ENCODE measurements at regions of chr14 and their contacts with region 1.

Region 1: GRCh38 chr14:20682435-20683124 is 1.8 kb upstream of the RNASE4 start:
- DNase-seq: peak; percentile 80 to 85 (median 82)
- H3K4me3 ChIP-seq: peak overlapping the region; percentile 75 to 88
- H3K4me3 Mint-ChIP-seq: no peak overlapping the region
- H3K27ac ChIP-seq: peak overlapping the region; percentile 91
- H3K27ac Mint-ChIP-seq: no peak overlapping the region
- H3K4me1 ChIP-seq: peaks cover 35% of the 10 kb centered on the region
- H3K4me1 Mint-ChIP-seq: peaks cover 9 to 23% (median 16%) of the 10 kb centered on the region in 4 donors
- H3K27me3 ChIP-seq: no peaks in the 10 kb centered on the region
- H3K27me3 Mint-ChIP-seq: peaks cover 0 to 8% of the 10 kb centered on the region in 2 donors

Region 2: DNA sequence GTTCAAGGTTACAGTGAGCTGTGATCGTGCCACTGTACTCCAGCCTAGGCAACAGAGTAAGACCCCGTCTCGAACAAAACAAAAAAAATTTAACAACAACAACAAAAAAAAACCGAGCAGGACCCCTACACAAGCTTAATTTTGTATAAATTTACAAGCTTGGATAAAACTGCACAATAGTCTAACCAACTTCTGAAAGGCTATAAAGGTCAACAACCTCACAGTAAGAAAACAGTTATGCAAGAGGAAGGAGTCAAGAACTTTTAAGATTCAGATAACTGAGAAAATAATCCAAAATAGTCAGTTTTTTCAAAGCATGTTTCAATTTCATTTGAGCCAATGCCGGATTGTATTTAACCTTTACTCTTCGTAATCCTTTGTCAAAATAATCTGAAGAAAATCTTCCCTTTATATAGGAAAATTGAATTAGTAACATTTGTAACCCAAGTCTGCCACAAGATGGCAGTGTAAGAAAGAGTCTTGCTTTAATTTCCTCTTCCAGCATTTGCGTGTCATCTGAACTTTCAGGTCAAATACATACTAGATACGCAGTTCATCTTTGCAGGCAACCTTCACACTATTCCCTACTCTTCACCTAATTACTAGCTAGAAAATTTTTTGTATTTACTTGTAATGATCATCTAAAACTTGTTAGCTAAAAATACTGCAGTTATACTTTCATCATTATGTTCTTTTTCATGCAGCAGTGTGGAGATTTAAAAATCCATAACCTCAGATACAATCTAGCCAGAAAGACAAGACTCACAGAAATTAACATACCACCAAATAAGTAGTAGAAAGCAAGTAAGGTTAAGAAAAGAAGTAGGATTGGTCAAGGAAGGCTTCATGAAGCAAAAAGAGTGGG is 355.3 kb before region 1 on chr14:
- CTCF ChIA-PET with region 1: interaction called, 20 read pairs
- POLR2A ChIA-PET with region 1: interaction called, 28 read pairs
- intact Hi-C with region 1: loop called (anchors 2 kb)
- DNase-seq: peak in 4 of 5 donors; percentile 65 to 68 (median 66)
- H3K4me3 ChIP-seq: no peak overlapping the region
- H3K4me3 Mint-ChIP-seq: peak overlapping the region in 3 of 8 donors; percentile 17 to 50 (median 45)
- H3K27ac ChIP-seq: peak overlapping the region; percentile 17
- H3K27ac Mint-ChIP-seq: peak overlapping the region; percentile 24 to 92 (median 77)
- H3K4me1 ChIP-seq: peaks cover 10% of the 10 kb centered on the region
- H3K4me1 Mint-ChIP-seq: peaks cover 15 to 35% (median 22%) of the 10 kb centered on the region in 4 donors
- H3K27me3 ChIP-seq: no peaks in the 10 kb centered on the region
- H3K27me3 Mint-ChIP-seq: no peaks in the 10 kb centered on the region

Region 3: DNA sequence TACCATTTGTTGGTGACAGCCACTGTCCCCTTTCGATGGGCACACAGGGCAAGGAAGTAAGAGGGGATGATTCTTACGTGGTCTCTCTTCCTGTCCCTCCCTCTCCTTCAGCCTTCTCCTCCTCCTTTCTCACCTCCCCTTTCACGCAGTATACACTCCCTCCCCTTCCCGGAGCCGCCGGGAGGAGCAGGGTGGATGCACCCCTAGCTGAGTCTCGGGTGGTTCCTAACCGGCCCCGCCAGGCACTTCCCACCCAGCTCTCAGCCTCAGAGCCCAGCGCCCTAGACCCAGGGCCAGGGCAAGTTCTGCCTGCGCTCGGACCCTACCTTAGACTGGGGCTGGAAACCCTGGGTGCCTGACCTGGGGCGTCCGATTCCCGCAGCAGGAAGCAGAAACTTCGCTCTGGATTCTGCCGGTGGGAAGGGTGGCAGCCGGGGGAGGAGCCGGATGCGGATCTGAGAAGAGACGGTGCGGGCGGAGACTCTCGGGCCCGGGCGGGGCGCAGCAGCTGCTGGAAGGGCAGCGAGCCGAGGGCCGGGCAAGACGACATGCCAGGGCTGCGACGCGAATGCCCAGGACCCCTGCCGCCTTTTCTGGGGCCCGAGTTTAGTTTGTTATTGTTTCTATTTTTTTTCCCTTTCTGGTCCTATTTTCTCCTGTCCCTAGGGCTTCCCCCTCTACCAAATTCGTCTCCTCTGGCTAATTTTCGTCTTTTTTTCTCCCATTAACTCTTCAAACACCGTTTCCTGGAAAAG is 269.4 kb before region 1 on chr14 and contains the start of gene TEP1:
- CTCF ChIA-PET with region 1: no interaction called
- POLR2A ChIA-PET with region 1: interaction called, 7 read pairs
- intact Hi-C with region 1: loop called (anchors 1 kb)
- DNase-seq: peak; percentile 56 to 75 (median 65)
- H3K4me3 ChIP-seq: peak within 1 kb of the TSS; percentile 73 to 79
- H3K4me3 Mint-ChIP-seq: peak within 1 kb of the TSS; percentile 92 to 100 (median 99)
- H3K27ac ChIP-seq: peak within 1 kb of the TSS; percentile 85
- H3K27ac Mint-ChIP-seq: peak within 1 kb of the TSS; percentile 91 to 99 (median 96)
- H3K4me1 ChIP-seq: peaks cover 38% of the 10 kb centered on the region
- H3K4me1 Mint-ChIP-seq: peaks cover 32 to 52% (median 41%) of the 10 kb centered on the region in 4 donors
- H3K27me3 ChIP-seq: no peaks in the 10 kb centered on the region
- H3K27me3 Mint-ChIP-seq: no peaks in the 10 kb centered on the region
- total RNA-seq, gene TEP1: 66.7 to 67.3 TPM

Region 4: GRCh38 chr14:20469242-20469889 is 213.2 kb before region 1 on chr14 and contains the start of gene PNP:
- CTCF ChIA-PET with region 1: interaction called, 5 read pairs
- POLR2A ChIA-PET with region 1: interaction called, 11 read pairs
- intact Hi-C with region 1: no loop called
- DNase-seq: peak; percentile 84 to 92 (median 88)
- H3K4me3 ChIP-seq: peak within 1 kb of the TSS; percentile 84 to 92
- H3K4me3 Mint-ChIP-seq: peak within 1 kb of the TSS; percentile 97 to 100 (median 99)
- H3K27ac ChIP-seq: peak within 1 kb of the TSS; percentile 77
- H3K27ac Mint-ChIP-seq: peak within 1 kb of the TSS; percentile 94 to 99 (median 98)
- H3K4me1 ChIP-seq: peaks cover 47% of the 10 kb centered on the region
- H3K4me1 Mint-ChIP-seq: peaks cover 33 to 55% (median 43%) of the 10 kb centered on the region in 4 donors
- H3K27me3 ChIP-seq: no peaks in the 10 kb centered on the region
- H3K27me3 Mint-ChIP-seq: no peaks in the 10 kb centered on the region
- total RNA-seq, gene PNP: 106 to 108 TPM

Region 5: DNA sequence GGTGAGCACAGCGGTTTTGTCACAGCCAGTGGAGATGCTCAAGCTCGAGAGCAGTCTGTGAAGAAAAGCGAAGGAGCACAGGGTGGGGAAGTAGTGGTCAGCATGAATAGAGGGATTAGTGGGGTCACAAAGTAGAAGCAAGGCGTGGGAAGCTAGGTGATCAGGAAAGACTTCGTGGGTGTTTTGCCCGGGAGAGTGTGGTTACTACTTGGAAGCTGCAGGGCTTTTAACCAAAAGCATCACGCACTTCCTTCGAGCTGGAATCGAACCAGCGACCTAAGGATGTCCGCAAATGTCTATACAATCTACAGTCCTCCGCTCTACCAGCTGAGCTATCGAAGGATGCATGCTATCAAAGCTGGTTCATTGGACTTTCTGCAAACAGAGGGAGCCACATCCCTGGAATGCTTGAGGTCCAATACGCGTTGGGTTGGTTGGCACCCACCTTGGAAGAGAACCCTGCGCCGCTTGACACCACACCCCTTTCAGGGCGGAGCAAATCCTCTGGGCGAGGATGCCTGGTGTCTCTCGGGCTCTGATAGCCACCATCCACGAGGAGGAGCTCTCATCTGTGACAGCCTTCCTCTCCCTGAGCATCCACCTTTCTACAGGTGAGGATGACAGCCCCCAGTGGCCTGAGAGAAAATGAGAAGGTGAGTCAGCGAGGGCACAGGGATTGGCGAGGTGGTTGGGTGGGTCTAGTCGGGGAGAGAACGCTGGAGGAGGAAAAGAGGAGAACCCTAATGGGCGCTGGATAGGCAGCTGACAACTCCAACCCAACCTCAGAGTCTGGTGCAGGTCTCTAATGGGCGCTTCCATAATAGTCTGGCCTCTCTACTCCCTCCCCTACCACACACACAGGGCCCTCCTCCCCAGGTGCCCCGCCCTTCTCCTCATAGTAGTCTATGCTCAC is 25.1 kb before region 1 on chr14:
- CTCF ChIA-PET with region 1: interaction called, 349 read pairs
- POLR2A ChIA-PET with region 1: interaction called, 70 read pairs
- intact Hi-C with region 1: no loop called
- DNase-seq: peak in 3 of 5 donors; percentile 15 to 19 (median 19)
- H3K4me3 ChIP-seq: no peak overlapping the region
- H3K4me3 Mint-ChIP-seq: peak overlapping the region in 3 of 8 donors; percentile 5 to 64 (median 22)
- H3K27ac ChIP-seq: no peak overlapping the region
- H3K27ac Mint-ChIP-seq: no peak overlapping the region
- H3K4me1 ChIP-seq: peaks cover 31% of the 10 kb centered on the region
- H3K4me1 Mint-ChIP-seq: peaks cover 26 to 33% (median 28%) of the 10 kb centered on the region in 4 donors
- H3K27me3 ChIP-seq: peaks cover 14% of the 10 kb centered on the region
- H3K27me3 Mint-ChIP-seq: peaks cover 38 to 45% of the 10 kb centered on the region in 2 donors

Region 6: GRCh38 chr14:21255385-21256101 is 573.0 kb after region 1 on chr14:
- CTCF ChIA-PET with region 1: no interaction called
- POLR2A ChIA-PET with region 1: no interaction called
- intact Hi-C with region 1: no loop called
- DNase-seq: no peak
- H3K4me3 ChIP-seq: no peak overlapping the region
- H3K4me3 Mint-ChIP-seq: peak overlapping the region in 7 of 8 donors; percentile 37 to 75 (median 63)
- H3K27ac ChIP-seq: no peak overlapping the region
- H3K27ac Mint-ChIP-seq: peak overlapping the region; percentile 0 to 81 (median 58)
- H3K4me1 ChIP-seq: peaks cover 81% of the 10 kb centered on the region
- H3K4me1 Mint-ChIP-seq: peaks cover 51 to 91% (median 72%) of the 10 kb centered on the region in 4 donors
- H3K27me3 ChIP-seq: no peaks in the 10 kb centered on the region
- H3K27me3 Mint-ChIP-seq: no peaks in the 10 kb centered on the region

Region 7: DNA sequence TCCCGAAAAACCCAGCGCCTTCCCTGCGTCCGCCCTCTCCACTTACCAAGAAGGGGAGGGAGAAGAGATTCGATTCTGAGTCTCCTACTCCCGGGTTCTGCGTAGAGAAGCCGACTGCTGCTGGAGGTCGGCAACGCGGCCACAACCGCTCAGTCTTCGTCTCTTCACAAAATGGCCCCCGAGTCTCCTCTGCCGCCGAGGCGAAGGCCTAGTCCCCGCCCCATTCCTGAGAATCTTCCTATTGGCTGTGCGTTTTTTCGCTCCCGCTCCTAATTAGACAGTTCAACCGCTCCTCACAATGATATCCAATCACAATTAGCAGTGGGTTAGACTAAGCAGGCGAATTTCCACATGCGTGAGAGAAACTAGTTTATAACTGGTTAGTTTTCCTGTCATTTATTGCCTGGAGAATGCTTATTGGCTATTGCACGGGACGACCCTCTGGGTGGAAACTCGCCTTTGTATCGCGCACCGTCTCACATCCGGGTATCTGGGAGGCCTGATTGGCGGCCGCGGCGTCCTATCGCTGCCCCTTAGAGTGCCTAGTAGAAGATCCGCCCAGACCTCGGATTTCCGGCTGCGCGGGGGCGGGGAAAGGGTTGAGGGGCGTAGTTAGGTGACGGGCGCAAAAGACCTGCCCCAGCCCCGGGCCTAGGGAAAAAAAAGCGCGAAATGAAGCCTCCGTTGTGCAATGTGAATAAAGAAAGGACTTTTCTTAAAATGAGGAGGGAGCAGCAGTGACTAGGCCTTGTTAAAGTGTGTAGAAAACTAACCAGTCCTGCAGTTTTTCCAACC is 586.9 kb after region 1 on chr14 and contains the start of gene HNRNPC:
- CTCF ChIA-PET with region 1: no interaction called
- POLR2A ChIA-PET with region 1: no interaction called
- intact Hi-C with region 1: loop called (anchors 5 kb)
- DNase-seq: peak; percentile 100
- H3K4me3 ChIP-seq: peak within 1 kb of the TSS; percentile 92 to 99
- H3K4me3 Mint-ChIP-seq: peak within 1 kb of the TSS; percentile 92 to 100 (median 100)
- H3K27ac ChIP-seq: peak within 1 kb of the TSS; percentile 98
- H3K27ac Mint-ChIP-seq: peak within 1 kb of the TSS; percentile 96 to 100 (median 100)
- H3K4me1 ChIP-seq: peaks cover 48% of the 10 kb centered on the region
- H3K4me1 Mint-ChIP-seq: peaks cover 26 to 49% (median 35%) of the 10 kb centered on the region in 4 donors
- H3K27me3 ChIP-seq: no peaks in the 10 kb centered on the region
- H3K27me3 Mint-ChIP-seq: no peaks in the 10 kb centered on the region
- total RNA-seq, gene HNRNPC: 538 to 539 TPM

Measured in CD4-positive, alpha-beta memory T cell (primary cell).